Caco-2 (cell line): ENCODE measurements at regions of chr5 and their contacts with region 1.

Region 1: GRCh38 chr5:72366324-72366976 is 46.3 kb downstream of the PTCD2 start:
- DNase-seq: peak; percentile 73 to 76
- H3K4me3 ChIP-seq: no peak overlapping the region
- H3K4me3 Mint-ChIP-seq: no peak overlapping the region
- H3K27ac Mint-ChIP-seq: no peak overlapping the region
- H3K4me1 ChIP-seq: peaks cover 12% of the 10 kb centered on the region; the same call in 1 of the 2 replicates
- H3K4me1 Mint-ChIP-seq: no peaks in the 10 kb centered on the region
- H3K27me3 ChIP-seq: no peaks in the 10 kb centered on the region
- H3K27me3 Mint-ChIP-seq: no peaks in the 10 kb centered on the region
- CTCF ChIP-seq: peak; percentile 64 to 76

Region 2: GRCh38 chr5:72523960-72524582 is 157.6 kb after region 1 on chr5:
- CTCF ChIA-PET with region 1: interaction called, 30 read pairs
- POLR2A ChIA-PET with region 1: no interaction called
- intact Hi-C with region 1: loop called (anchors 1 kb)
- DNase-seq: peak in 1 of 2 experiments; percentile 44
- H3K4me3 ChIP-seq: no peak overlapping the region
- H3K4me3 Mint-ChIP-seq: no peak overlapping the region
- H3K27ac Mint-ChIP-seq: no peak overlapping the region
- H3K4me1 ChIP-seq: no peaks in the 10 kb centered on the region
- H3K4me1 Mint-ChIP-seq: no peaks in the 10 kb centered on the region
- H3K27me3 ChIP-seq: no peaks in the 10 kb centered on the region
- H3K27me3 Mint-ChIP-seq: no peaks in the 10 kb centered on the region
- CTCF ChIP-seq: peak; percentile 21 to 55

Region 3: GRCh38 chr5:72556351-72557166 is 190.1 kb after region 1 on chr5:
- CTCF ChIA-PET with region 1: interaction called, 11 read pairs
- POLR2A ChIA-PET with region 1: no interaction called
- intact Hi-C with region 1: loop called (anchors 1 kb)
- DNase-seq: peak; percentile 53 to 62
- H3K4me3 ChIP-seq: peak overlapping the region; percentile 44
- H3K4me3 Mint-ChIP-seq: peak overlapping the region; percentile 80
- H3K27ac Mint-ChIP-seq: peak overlapping the region; percentile 58
- H3K4me1 ChIP-seq: no peaks in the 10 kb centered on the region
- H3K4me1 Mint-ChIP-seq: peaks cover 7% of the 10 kb centered on the region
- H3K27me3 ChIP-seq: no peaks in the 10 kb centered on the region
- H3K27me3 Mint-ChIP-seq: no peaks in the 10 kb centered on the region
- CTCF ChIP-seq: peak; percentile 10 to 61

Region 4: GRCh38 chr5:72569408-72569944 is 203.0 kb after region 1 on chr5:
- CTCF ChIA-PET with region 1: no interaction called
- POLR2A ChIA-PET with region 1: no interaction called
- intact Hi-C with region 1: no loop called
- DNase-seq: no peak
- H3K4me3 ChIP-seq: no peak overlapping the region
- H3K4me3 Mint-ChIP-seq: no peak overlapping the region
- H3K27ac Mint-ChIP-seq: no peak overlapping the region
- H3K4me1 ChIP-seq: no peaks in the 10 kb centered on the region
- H3K4me1 Mint-ChIP-seq: no peaks in the 10 kb centered on the region
- H3K27me3 ChIP-seq: no peaks in the 10 kb centered on the region
- H3K27me3 Mint-ChIP-seq: no peaks in the 10 kb centered on the region
- CTCF ChIP-seq: no peak

Region 5: GRCh38 chr5:72847989-72848473 is 481.6 kb after region 1 on chr5:
- CTCF ChIA-PET with region 1: no interaction called
- POLR2A ChIA-PET with region 1: no interaction called
- intact Hi-C with region 1: loop called (anchors 1 kb)
- DNase-seq: peak; percentile 89 to 91
- H3K4me3 ChIP-seq: peak overlapping the region; percentile 62
- H3K4me3 Mint-ChIP-seq: peak overlapping the region; percentile 98
- H3K27ac Mint-ChIP-seq: peak overlapping the region; percentile 94
- H3K4me1 ChIP-seq: no peaks in the 10 kb centered on the region; the same call in 1 of the 2 replicates
- H3K4me1 Mint-ChIP-seq: peaks cover 15% of the 10 kb centered on the region
- H3K27me3 ChIP-seq: no peaks in the 10 kb centered on the region
- H3K27me3 Mint-ChIP-seq: no peaks in the 10 kb centered on the region
- CTCF ChIP-seq: peak in 1 of 2 experiments; percentile 22